OCI-LY7 (cell line): ENCODE measurements at regions of chr18 and their contacts with region 1.

Region 1: GRCh38 chr18:2723207-2723606 is 67.7 kb downstream of the SMCHD1 start:
- DNase-seq: no peak
- H3K4me3 ChIP-seq: no peak overlapping the region
- H3K27ac ChIP-seq: no peak overlapping the region
- H3K4me1 ChIP-seq: no peaks in the 10 kb centered on the region
- CTCF ChIP-seq: no peak

Region 2: DNA sequence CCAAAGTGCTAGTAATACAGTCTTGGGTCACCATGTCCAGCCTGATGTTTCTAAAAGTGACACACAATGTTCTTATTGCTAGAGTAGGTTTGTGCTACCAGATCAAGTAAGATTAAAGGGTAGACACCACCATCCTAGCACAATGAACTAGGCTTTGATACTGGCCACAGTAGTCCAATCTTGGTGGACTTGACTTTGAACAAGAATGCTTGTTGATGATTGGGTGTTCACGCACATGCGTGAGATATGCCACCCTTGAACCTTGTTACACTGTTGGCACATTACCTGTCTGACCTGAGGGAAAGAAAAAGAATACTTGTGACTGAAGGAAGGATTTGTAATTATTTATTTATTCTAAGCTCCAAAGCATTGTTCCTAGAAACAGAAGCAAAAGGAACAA is 51.5 kb after region 1 on chr18:
- CTCF ChIA-PET with region 1: no interaction called
- POLR2A ChIA-PET with region 1: no interaction called
- intact Hi-C with region 1: loop called (anchors 5 kb)
- DNase-seq: no peak
- H3K4me3 ChIP-seq: no peak overlapping the region
- H3K27ac ChIP-seq: no peak overlapping the region
- H3K4me1 ChIP-seq: no peaks in the 10 kb centered on the region
- CTCF ChIP-seq: no peak

Region 3: GRCh38 chr18:3051718-3052410 is 328.7 kb after region 1 on chr18:
- CTCF ChIA-PET with region 1: no interaction called
- POLR2A ChIA-PET with region 1: no interaction called
- intact Hi-C with region 1: no loop called
- DNase-seq: no peak
- H3K4me3 ChIP-seq: no peak overlapping the region
- H3K27ac ChIP-seq: no peak overlapping the region
- H3K4me1 ChIP-seq: no peaks in the 10 kb centered on the region
- CTCF ChIP-seq: no peak